Adrenal gland (tissue), 19 donors: ENCODE measurements at regions of chr5 and their contacts with region 1.

Region 1: DNA sequence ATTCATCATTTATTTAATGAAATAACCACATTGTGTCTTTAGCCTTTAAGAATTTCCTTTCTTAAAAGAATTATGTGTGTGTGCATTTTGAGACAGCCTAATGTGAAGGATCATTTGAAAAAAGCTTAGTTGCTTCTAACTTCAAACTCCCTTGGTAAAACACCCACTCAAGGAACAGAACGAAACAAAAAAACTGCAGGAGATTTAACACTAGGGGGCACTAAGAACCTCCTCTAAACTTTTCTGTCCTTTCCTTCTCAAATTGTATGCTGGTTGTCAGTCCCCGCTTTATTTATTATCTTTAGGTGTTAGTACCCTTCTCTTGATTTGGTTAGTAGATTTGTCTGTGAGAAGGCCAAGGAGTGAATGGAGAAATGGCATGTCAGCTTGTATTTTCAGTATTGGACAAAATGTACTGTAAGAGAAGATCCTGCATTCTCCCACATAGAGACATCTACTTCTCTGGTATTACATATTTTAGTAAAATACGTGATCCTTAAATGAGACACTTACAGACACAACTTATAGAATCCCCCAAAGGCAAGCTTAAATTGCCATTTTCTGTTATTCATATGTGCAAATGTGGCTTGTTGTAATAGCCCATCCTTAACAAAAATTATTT is 229.7 kb downstream of the MRPS30 start:
- DNase-seq: no peak
- H3K4me3 ChIP-seq: no peak overlapping the region
- H3K27ac ChIP-seq: no peak overlapping the region
- H3K4me1 ChIP-seq: no peaks in the 10 kb centered on the region
- H3K27me3 ChIP-seq: no peaks in the 10 kb centered on the region
- CTCF ChIP-seq: peak; percentile 34 to 64 (median 48)
- POLR2A ChIP-seq: no peak

Region 2: DNA sequence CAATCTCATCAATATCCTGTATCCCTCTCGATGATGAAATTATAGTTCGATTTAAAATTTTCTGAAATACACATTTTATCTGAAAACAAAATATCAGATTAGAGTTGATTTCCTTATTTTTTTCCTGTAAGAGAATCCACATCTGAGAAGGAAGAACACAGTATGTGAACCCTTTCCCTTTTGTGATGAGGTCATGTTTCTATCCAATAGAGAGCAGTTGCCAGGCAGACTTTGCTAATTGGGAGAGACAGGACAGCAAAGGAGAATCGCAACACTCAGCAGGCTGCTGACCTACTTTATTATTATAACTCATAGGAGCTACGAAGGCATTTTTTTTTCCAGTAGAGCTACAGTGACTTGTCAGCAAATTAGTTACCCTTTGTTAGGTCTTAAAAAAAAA is 415.6 kb after region 1 on chr5:
- intact Hi-C with region 1: no loop called
- DNase-seq: peak; percentile 37 to 76 (median 62)
- H3K4me3 ChIP-seq: peak overlapping the region in 1 of 4 donors; percentile 21
- H3K27ac ChIP-seq: no peak overlapping the region
- H3K4me1 ChIP-seq: no peaks in the 10 kb centered on the region
- H3K27me3 ChIP-seq: no peaks in the 10 kb centered on the region
- CTCF ChIP-seq: no peak
- POLR2A ChIP-seq: no peak

Region 3: DNA sequence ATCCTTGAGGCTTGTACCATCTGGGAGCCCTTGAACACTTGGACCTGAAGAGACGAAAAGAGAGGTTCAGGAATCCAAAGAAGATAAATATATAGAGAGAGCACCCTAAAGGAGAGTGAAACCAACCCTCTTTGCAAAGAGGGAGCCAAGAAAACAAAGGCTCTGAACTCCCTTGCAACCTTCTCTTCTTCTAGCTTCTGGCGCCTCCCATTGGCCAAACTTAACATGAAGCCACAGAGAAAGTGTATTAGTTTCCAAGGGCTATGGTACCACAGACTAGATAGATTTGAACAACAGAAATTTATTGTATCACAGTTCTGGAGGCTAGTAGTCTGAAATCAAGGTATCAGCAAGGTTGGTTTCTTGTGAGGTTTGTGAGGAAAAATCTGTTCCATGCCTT is 482.6 kb after region 1 on chr5:
- intact Hi-C with region 1: loop called in 1 of 2 experiments (anchors 10 kb)
- DNase-seq: peak; percentile 28 to 57 (median 43)
- H3K4me3 ChIP-seq: no peak overlapping the region
- H3K27ac ChIP-seq: no peak overlapping the region
- H3K4me1 ChIP-seq: no peaks in the 10 kb centered on the region
- H3K27me3 ChIP-seq: no peaks in the 10 kb centered on the region
- CTCF ChIP-seq: peak in 5 of 6 experiments; percentile 16 to 43 (median 40)
- POLR2A ChIP-seq: no peak